B cell (primary cell): ENCODE measurements at regions of chr9 and their contacts with region 1.

Region 1: DNA sequence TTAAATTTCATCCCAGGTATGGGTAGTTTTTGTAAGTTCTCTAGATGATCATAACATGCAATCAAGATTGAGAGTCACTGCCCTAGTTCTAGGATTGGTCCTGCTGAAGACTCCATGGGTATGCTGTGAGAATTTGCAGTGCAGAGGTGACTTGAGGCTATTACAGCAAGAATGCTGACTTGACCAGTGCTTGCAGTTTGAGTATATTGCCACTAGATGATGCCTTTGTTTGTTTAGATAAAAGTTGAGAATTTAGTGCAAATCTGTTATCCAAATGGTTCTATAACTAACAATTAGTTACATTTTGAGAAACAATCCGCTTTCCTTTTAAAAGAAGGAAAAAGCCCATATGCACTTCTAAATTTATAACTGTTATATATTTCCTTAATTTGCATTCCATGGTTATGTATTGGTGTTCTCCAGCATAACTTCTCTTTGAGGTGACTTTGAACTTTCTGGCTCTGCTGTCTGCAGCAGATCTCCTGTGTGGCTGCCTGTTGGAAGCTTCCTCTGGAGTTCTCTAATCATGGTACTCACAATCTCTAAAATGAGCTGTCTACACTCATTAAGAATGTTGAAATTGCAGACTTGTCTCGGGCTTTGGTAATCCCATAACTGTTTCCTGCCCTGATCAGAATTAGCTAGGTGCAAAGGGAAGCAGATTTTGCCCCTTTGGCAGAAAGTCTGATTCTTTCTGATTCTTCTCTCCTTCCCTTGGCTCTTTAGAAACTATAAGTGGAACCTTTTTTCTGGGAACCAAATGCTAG is 24.9 kb downstream of the MELK start:
- DNase-seq: peak; percentile 16
- ATAC-seq: no peak
- H3K4me3 ChIP-seq: no peak overlapping the region
- H3K4me3 Mint-ChIP-seq: no peak overlapping the region
- H3K27ac ChIP-seq: no peak overlapping the region
- H3K27ac Mint-ChIP-seq: no peak overlapping the region
- H3K4me1 ChIP-seq: no peaks in the 10 kb centered on the region
- H3K4me1 Mint-ChIP-seq: peaks cover under 1% of the 10 kb centered on the region
- H3K27me3 ChIP-seq: no peaks in the 10 kb centered on the region
- H3K27me3 Mint-ChIP-seq: no peaks in the 10 kb centered on the region
- CTCF ChIP-seq: peak; percentile 32

Region 2: GRCh38 chr9:36728651-36729520 is 131.3 kb after region 1 on chr9:
- CTCF ChIA-PET with region 1: interaction called, 10 read pairs
- POLR2A ChIA-PET with region 1: no interaction called
- intact Hi-C with region 1: no loop called
- DNase-seq: peak; percentile 68
- ATAC-seq: peak; percentile 78
- H3K4me3 ChIP-seq: no peak overlapping the region
- H3K4me3 Mint-ChIP-seq: no peak overlapping the region
- H3K27ac ChIP-seq: no peak overlapping the region
- H3K27ac Mint-ChIP-seq: no peak overlapping the region
- H3K4me1 ChIP-seq: peaks cover 9 to 10% of the 10 kb centered on the region in 2 donors
- H3K4me1 Mint-ChIP-seq: peaks cover 10% of the 10 kb centered on the region
- H3K27me3 ChIP-seq: no peaks in the 10 kb centered on the region
- H3K27me3 Mint-ChIP-seq: no peaks in the 10 kb centered on the region
- CTCF ChIP-seq: peak; percentile 91

Region 3: DNA sequence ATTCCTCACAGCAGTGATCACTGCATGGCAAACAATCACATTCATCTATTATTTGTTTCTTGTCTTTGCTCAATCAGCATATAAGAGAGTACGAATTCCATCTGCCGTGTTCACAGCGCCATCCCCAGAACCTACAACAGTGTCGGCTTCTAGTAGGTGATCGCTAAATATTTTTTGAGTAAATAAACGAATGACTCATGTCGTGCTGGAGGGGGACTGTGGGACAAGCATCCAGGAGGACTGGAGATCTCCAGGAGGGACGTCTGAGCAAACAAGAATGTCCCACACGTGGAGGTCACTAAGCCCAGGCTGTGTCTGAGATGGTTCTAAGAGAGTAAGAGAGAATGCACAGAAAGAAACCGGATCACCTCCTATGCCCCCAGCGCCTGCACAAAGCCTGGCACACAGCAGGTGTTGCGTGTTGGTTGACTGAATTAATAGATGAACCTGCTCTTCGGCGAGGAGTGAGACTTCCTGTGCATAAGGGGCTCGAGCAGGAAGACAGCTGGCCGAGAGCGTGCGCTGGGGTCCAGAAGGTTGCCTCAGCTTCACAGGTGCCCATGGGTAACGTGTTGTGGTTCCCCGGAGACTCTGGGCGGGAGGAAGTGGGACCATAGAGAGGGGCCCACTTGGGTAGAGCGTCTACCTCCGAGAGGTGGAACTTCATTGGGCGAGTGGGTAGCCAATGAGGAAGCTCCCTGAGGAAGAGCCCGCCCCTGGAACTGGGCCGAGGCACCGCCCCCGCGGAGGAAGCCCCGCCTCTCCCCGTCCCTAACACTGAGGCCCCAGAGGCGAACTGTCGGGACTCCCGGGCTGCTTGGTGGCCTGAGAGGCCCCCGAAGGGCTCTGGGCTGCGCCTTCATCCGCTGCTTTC is 168.1 kb after region 1 on chr9:
- CTCF ChIA-PET with region 1: no interaction called
- POLR2A ChIA-PET with region 1: no interaction called
- intact Hi-C with region 1: no loop called
- DNase-seq: peak; percentile 96
- ATAC-seq: peak; percentile 98
- H3K4me3 ChIP-seq: peak overlapping the region in 4 of 5 experiments; percentile 41 to 70 (median 58)
- H3K4me3 Mint-ChIP-seq: no peak overlapping the region
- H3K27ac ChIP-seq: peak overlapping the region; percentile 68 to 74
- H3K27ac Mint-ChIP-seq: no peak overlapping the region
- H3K4me1 ChIP-seq: peaks cover 5 to 12% of the 10 kb centered on the region in 2 donors
- H3K4me1 Mint-ChIP-seq: no peaks in the 10 kb centered on the region
- H3K27me3 ChIP-seq: peaks cover 0 to 9% (median 3%) of the 10 kb centered on the region in 4 experiments
- H3K27me3 Mint-ChIP-seq: peaks cover 20% of the 10 kb centered on the region
- CTCF ChIP-seq: no peak